ENCODE measurements at regions of chr3 and their contacts with region 1.

Region 1: GRCh38 chr3:104257486-104257885 is 1109.2 kb upstream of the ALCAM start:
- DNase-seq: no peak
- ATAC-seq: no peak
- H3K4me3 Mint-ChIP-seq: no peak overlapping the region
- H3K27ac Mint-ChIP-seq: no peak overlapping the region
- H3K4me1 Mint-ChIP-seq: no peaks in the 10 kb centered on the region
- H3K27me3 Mint-ChIP-seq: no peaks in the 10 kb centered on the region

Region 2: GRCh38 chr3:104066658-104067057 is 190.8 kb before region 1 on chr3:
- CTCF ChIA-PET with region 1: no interaction called
- POLR2A ChIA-PET with region 1: no interaction called
- intact Hi-C with region 1: no loop called
- DNase-seq: no peak
- ATAC-seq: no peak
- H3K4me3 Mint-ChIP-seq: no peak overlapping the region
- H3K27ac Mint-ChIP-seq: no peak overlapping the region
- H3K4me1 Mint-ChIP-seq: no peaks in the 10 kb centered on the region
- H3K27me3 Mint-ChIP-seq: no peaks in the 10 kb centered on the region

Region 3: GRCh38 chr3:104245261-104245660 is 12.2 kb before region 1 on chr3:
- CTCF ChIA-PET with region 1: interaction called, 3 read pairs
- POLR2A ChIA-PET with region 1: no interaction called
- intact Hi-C with region 1: loop called in 1 of 2 experiments (anchors 1 kb)
- DNase-seq: no peak
- ATAC-seq: no peak
- H3K4me3 Mint-ChIP-seq: no peak overlapping the region
- H3K27ac Mint-ChIP-seq: no peak overlapping the region
- H3K4me1 Mint-ChIP-seq: no peaks in the 10 kb centered on the region
- H3K27me3 Mint-ChIP-seq: no peaks in the 10 kb centered on the region